Natural killer cell (primary cell): ENCODE measurements at regions of chr2 and their contacts with region 1.

Region 1: DNA sequence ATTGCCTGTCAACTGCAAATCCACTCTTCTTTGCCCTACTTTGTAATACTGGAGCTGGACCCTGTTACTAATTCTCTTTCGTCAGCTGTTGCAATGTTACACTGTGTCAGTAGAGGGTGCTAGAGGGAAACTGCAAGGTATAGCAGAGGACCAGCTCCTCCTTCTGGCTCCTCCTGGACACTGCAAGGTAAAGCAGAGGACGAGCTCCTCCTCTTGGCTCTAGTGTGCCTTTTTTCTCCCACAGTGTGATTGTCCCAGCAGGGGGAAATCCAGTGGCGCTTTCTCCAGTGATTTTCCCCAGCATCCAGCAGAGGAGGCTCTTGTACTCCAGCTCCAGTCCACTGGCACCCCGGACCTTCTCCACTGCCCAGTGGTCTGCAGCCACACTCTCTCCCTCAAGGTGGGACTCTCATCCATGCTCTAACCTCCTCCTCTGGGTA is 95.6 kb downstream of the CAPN13 start:
- DNase-seq: peak; percentile 73 to 94
- ATAC-seq: peak; percentile 93 to 97 (median 96)
- H3K4me3 ChIP-seq: no peak overlapping the region
- H3K4me3 Mint-ChIP-seq: no peak overlapping the region
- H3K27ac ChIP-seq: no peak overlapping the region
- H3K27ac Mint-ChIP-seq: no peak overlapping the region
- H3K4me1 ChIP-seq: peaks cover 7% of the 10 kb centered on the region
- H3K4me1 Mint-ChIP-seq: peaks cover 10 to 23% of the 10 kb centered on the region in 2 donors
- H3K27me3 ChIP-seq: no peaks in the 10 kb centered on the region
- H3K27me3 Mint-ChIP-seq: no peaks in the 10 kb centered on the region
- CTCF ChIP-seq: peak; percentile 100

Region 2: DNA sequence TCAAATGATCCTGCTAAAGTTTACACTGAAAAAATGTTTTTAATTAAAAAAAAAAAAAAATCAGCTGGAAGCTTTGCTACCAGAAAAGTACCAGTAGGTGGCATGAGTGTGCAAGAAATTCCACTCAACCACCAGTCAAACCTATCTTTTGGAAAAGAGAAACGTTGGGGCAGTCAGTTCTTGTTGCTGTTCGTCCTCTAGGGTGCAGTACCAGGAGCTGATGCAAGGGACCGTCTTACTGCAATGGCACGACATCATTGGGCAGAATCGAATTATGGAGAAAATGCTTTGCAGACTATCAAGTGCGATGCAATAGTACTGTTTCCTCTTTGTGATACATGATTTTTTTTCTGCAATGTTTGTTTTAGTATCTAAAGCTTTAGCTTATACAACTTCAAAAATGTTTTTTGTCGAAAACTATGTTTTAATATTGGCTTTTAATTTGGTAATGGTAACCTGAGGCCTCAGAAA is 546.6 kb before region 1 on chr2:
- intact Hi-C with region 1: loop called (anchors 1 kb)
- DNase-seq: peak; percentile 32 to 90
- ATAC-seq: peak; percentile 54 to 89 (median 85)
- H3K4me3 ChIP-seq: no peak overlapping the region
- H3K4me3 Mint-ChIP-seq: peak overlapping the region; percentile 61
- H3K27ac ChIP-seq: no peak overlapping the region
- H3K27ac Mint-ChIP-seq: peak overlapping the region in 1 of 2 donors; percentile 70
- H3K4me1 ChIP-seq: no peaks in the 10 kb centered on the region
- H3K4me1 Mint-ChIP-seq: peaks cover 21 to 26% of the 10 kb centered on the region in 2 donors
- H3K27me3 ChIP-seq: no peaks in the 10 kb centered on the region
- H3K27me3 Mint-ChIP-seq: no peaks in the 10 kb centered on the region
- CTCF ChIP-seq: peak; percentile 80

Region 3: DNA sequence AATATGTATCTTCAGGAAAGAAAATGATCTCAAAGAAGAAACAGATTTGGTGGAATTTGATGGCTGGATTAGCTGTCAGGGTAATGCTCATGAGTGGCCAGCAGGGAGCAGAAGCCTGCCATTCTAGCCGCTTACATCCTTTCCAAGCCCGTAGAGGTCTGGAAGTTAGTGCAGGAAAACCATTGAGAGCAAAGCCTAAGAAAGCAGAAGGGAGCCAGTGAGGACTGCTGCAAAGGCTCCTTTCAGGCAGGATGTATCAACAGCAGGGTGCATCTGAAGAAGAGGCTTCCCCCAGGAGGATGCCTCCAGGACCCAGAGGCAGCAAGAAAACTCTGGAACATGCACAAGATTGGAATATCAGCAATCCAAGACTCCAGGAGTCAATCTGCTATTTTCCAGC is 503.2 kb before region 1 on chr2:
- intact Hi-C with region 1: loop called (anchors 1 kb)
- DNase-seq: peak in 1 of 2 donors; percentile 73
- ATAC-seq: peak in 2 of 3 donors; percentile 78 to 84
- H3K4me3 ChIP-seq: no peak overlapping the region
- H3K4me3 Mint-ChIP-seq: no peak overlapping the region
- H3K27ac ChIP-seq: no peak overlapping the region
- H3K27ac Mint-ChIP-seq: peak overlapping the region in 1 of 2 donors; percentile 2
- H3K4me1 ChIP-seq: peaks cover 12% of the 10 kb centered on the region
- H3K4me1 Mint-ChIP-seq: peaks cover 14 to 15% of the 10 kb centered on the region in 2 donors
- H3K27me3 ChIP-seq: no peaks in the 10 kb centered on the region
- H3K27me3 Mint-ChIP-seq: no peaks in the 10 kb centered on the region
- CTCF ChIP-seq: peak; percentile 89

Region 4: DNA sequence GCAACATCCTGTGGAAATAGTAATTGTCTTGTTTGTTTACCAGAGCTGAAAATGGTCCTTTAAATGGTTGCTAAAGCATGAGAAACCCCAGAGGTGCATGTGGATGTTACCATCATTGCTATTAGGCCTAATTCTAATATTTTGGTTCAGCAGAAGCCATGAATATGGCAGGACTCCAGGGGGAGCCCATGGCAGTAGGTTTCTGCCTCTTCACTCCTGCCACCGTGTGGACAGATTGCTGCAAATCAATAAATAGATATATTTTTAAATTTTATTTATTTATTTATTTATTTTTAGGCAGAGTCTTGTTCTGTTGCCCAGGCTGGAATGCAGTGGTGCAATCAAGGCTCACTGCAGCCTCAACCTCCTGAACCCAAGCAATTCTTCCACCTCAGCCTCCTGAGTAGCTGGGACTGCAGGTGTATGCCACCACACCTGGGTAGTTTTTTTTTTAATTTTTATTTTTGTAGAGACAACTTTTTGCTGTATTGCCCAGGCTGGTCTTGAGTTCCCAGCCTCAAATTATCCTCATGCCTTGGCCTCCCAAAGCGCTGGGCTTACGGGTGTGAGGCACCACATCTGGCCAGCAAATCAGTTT is 150.5 kb after region 1 on chr2:
- intact Hi-C with region 1: loop called (anchors 1 kb)
- DNase-seq: peak in 1 of 2 donors; percentile 69
- ATAC-seq: peak; percentile 42 to 61 (median 47)
- H3K4me3 ChIP-seq: no peak overlapping the region
- H3K4me3 Mint-ChIP-seq: no peak overlapping the region
- H3K27ac ChIP-seq: no peak overlapping the region
- H3K27ac Mint-ChIP-seq: no peak overlapping the region
- H3K4me1 ChIP-seq: no peaks in the 10 kb centered on the region
- H3K4me1 Mint-ChIP-seq: peaks cover 0 to 3% of the 10 kb centered on the region in 2 donors
- H3K27me3 ChIP-seq: no peaks in the 10 kb centered on the region
- H3K27me3 Mint-ChIP-seq: peaks cover 0 to 7% of the 10 kb centered on the region in 2 donors
- CTCF ChIP-seq: peak; percentile 50

Region 5: GRCh38 chr2:30968660-30969397 is 257.2 kb after region 1 on chr2:
- intact Hi-C with region 1: no loop called
- DNase-seq: no peak
- ATAC-seq: no peak
- H3K4me3 ChIP-seq: no peak overlapping the region
- H3K4me3 Mint-ChIP-seq: no peak overlapping the region
- H3K27ac ChIP-seq: no peak overlapping the region
- H3K27ac Mint-ChIP-seq: no peak overlapping the region
- H3K4me1 ChIP-seq: no peaks in the 10 kb centered on the region
- H3K4me1 Mint-ChIP-seq: no peaks in the 10 kb centered on the region
- H3K27me3 ChIP-seq: no peaks in the 10 kb centered on the region
- H3K27me3 Mint-ChIP-seq: peaks cover 0 to 2% of the 10 kb centered on the region in 2 donors
- CTCF ChIP-seq: no peak

Region 6: GRCh38 chr2:31170071-31170698 is 458.5 kb after region 1 on chr2:
- intact Hi-C with region 1: loop called (anchors 2 kb)
- DNase-seq: peak; percentile 24 to 72
- ATAC-seq: peak; percentile 61 to 95 (median 76)
- H3K4me3 ChIP-seq: no peak overlapping the region
- H3K4me3 Mint-ChIP-seq: no peak overlapping the region
- H3K27ac ChIP-seq: no peak overlapping the region
- H3K27ac Mint-ChIP-seq: no peak overlapping the region
- H3K4me1 ChIP-seq: no peaks in the 10 kb centered on the region
- H3K4me1 Mint-ChIP-seq: peaks cover under 1% of the 10 kb centered on the region in 2 donors
- H3K27me3 ChIP-seq: no peaks in the 10 kb centered on the region
- H3K27me3 Mint-ChIP-seq: peaks cover 7 to 8% of the 10 kb centered on the region in 2 donors
- CTCF ChIP-seq: peak; percentile 73

Region 7: DNA sequence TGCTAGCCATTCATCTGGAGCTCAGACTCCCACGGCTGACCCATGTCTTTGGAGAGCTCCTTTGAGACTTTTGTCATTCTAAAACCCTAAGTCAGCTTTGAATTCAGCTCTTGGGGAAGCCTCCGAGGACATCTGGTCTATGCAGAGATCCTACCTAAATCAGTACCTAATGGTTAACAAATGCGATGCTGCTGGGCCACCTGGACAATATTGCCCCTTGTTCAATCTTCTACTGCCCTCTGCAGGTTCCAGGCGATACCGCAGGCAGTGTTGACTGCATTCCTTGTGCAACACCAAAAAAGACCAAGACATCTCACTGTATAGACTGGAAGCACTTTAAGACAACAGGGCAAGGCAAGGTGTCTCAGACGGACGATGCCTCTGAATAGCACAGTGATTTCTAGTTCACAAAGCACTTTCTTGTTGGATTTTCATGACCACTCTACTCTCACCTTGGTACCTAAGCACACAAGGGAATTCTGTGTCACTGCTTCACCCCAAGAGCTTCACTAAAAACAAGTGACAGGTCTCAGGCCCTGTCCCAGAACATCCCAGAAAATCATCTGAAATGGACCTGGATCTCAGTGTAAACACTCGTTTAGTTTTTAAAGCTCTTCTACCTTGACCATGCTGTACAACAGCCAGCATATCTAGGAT is 622.0 kb after region 1 on chr2:
- intact Hi-C with region 1: loop called (anchors 1 kb)
- DNase-seq: peak; percentile 63 to 82
- ATAC-seq: peak; percentile 77 to 94 (median 92)
- H3K4me3 ChIP-seq: no peak overlapping the region
- H3K4me3 Mint-ChIP-seq: no peak overlapping the region
- H3K27ac ChIP-seq: no peak overlapping the region
- H3K27ac Mint-ChIP-seq: no peak overlapping the region
- H3K4me1 ChIP-seq: no peaks in the 10 kb centered on the region
- H3K4me1 Mint-ChIP-seq: no peaks in the 10 kb centered on the region
- H3K27me3 ChIP-seq: no peaks in the 10 kb centered on the region
- H3K27me3 Mint-ChIP-seq: peaks cover 0 to 3% of the 10 kb centered on the region in 2 donors
- CTCF ChIP-seq: peak; percentile 93

Region 8: DNA sequence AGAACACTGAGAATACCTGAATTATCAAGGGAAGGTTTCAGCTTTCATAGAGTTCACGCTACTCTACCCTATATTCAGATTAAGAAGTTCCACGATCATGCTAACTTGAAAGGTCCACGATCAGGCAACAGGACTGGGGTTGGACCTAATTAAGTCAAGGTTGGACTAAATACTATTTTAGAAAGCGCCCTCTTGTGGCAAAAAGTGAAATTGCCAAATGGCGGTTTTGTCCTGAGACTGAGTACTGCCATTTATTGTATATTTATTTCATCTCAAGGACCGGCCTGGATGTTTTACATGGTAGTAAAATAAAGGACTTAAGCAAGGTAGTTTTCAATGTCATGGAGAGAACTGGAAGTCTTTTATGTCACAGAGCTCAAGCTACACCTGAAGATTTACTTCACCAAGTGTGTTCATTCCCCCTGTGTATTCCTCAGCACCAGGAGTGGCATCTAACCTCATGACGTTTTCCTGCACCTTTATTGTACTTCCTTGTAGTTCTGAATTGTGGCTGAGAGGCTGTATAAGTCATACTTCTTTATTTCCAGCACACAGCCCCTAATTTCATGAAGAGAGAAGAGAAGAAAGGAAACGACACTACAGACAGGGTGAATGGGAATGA is 812.3 kb after region 1 on chr2:
- intact Hi-C with region 1: loop called (anchors 1 kb)
- DNase-seq: peak; percentile 25 to 64
- ATAC-seq: no peak
- H3K4me3 ChIP-seq: no peak overlapping the region
- H3K4me3 Mint-ChIP-seq: no peak overlapping the region
- H3K27ac ChIP-seq: no peak overlapping the region
- H3K27ac Mint-ChIP-seq: no peak overlapping the region
- H3K4me1 ChIP-seq: no peaks in the 10 kb centered on the region
- H3K4me1 Mint-ChIP-seq: peaks cover 0 to 4% of the 10 kb centered on the region in 2 donors
- H3K27me3 ChIP-seq: no peaks in the 10 kb centered on the region
- H3K27me3 Mint-ChIP-seq: peaks cover 0 to 18% of the 10 kb centered on the region in 2 donors
- CTCF ChIP-seq: peak; percentile 72